Thyroid gland (tissue), 4 donors: ENCODE measurements at regions of chr2 and their contacts with region 1.

Region 1: DNA sequence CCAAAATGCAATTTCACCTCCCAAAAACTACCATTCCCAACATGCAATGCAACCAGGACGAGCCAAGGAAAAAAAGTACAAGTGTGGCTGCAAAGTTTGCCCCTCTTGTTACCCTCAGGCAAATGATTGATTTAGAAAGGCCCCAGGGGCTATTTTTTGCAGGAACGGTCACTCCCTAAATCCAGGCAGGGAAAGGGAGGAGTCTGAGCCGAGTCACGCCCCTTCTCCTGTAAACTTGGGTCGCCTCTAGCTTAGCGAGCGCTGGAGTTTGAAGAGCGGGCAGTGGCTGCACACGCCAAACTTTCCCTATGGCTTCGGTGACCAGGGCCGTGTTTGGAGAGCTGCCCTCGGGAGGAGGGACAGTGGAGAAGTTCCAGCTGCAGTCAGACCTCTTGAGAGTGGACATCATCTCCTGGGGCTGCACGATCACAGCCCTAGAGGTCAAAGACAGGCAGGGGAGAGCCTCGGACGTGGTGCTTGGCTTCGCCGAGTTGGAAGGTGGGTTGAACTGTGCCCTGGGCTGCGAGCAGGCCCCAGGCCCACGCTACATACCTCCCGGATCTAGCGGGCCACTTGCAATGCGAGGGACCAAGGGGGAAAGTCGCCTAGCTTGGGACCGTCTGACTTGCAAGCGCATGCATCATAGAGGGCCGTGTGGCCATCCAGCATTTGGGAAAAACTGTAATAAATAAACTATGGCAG is at the start of gene GALM:
- DNase-seq: peak; percentile 89 to 92
- H3K4me3 ChIP-seq: peak within 1 kb of the TSS; percentile 10 to 66 (median 33)
- H3K27ac ChIP-seq: peak within 1 kb of the TSS; percentile 3 to 82 (median 74)
- H3K4me1 ChIP-seq: peaks cover 12 to 14% of the 10 kb centered on the region in 2 donors
- H3K27me3 ChIP-seq: no peaks in the 10 kb centered on the region
- CTCF ChIP-seq: peak in 1 of 6 experiments; percentile 29
- POLR2A ChIP-seq: peak in 1 of 2 donors; percentile 88
- total RNA-seq, gene GALM: 13.1 to 32.9 (median 25.8) TPM

Region 2: DNA sequence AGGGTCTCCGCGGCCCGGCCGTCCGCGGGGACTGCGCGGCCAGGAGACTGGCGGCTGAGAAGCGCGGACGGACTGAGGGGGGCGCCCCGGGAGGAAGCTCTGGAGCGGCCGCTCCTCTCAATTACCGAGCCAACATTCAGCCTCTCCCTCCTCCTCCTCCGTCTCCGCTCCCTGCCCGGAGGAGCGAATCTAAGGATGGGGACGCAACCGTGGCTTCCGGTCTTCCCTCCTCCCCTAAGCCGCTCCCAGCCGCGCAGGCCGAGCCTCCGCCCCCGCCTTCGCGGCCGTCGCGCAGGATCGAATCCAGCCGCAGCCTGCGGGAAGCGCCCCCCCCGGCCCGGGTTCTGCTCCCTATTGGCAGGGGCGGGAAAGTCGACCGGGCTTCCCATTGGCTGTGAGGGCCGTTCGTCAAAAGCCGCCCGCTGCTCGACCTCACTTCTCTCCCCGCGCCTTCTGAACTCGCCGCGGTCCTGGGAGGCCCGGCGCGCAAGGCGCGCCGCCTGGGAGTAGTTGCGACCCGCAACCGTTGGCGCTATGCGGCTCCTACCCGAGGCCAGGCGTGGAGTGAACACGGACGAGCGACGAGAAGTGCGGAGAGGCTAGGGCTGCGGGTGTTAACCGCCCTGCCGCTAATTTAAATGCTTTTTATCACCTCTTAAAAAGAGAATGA is 63.1 kb before region 1 on chr2 and contains the start of gene HNRNPLL:
- intact Hi-C with region 1: loop called (anchors 10 kb)
- DNase-seq: peak; percentile 97 to 100
- H3K4me3 ChIP-seq: peak within 1 kb of the TSS; percentile 69 to 98 (median 96)
- H3K27ac ChIP-seq: peak within 1 kb of the TSS; percentile 99
- H3K4me1 ChIP-seq: peaks cover 36 to 55% of the 10 kb centered on the region in 2 donors
- H3K27me3 ChIP-seq: no peaks in the 10 kb centered on the region
- CTCF ChIP-seq: no peak
- POLR2A ChIP-seq: peak; percentile 97 to 98
- total RNA-seq, gene HNRNPLL: 60.1 to 85.1 (median 64.3) TPM